Tibial artery (tissue), 4 donors: ENCODE measurements at regions of chr12 and their contacts with region 1.

Region 1: GRCh38 chr12:108905725-108906124 is 25.8 kb downstream of the DAO start:
- DNase-seq: no peak
- H3K4me3 ChIP-seq: no peak overlapping the region
- H3K27ac ChIP-seq: no peak overlapping the region
- H3K4me1 ChIP-seq: no peaks in the 10 kb centered on the region
- H3K27me3 ChIP-seq: peaks cover 0 to 2% of the 10 kb centered on the region in 2 donors
- CTCF ChIP-seq: no peak

Region 2: GRCh38 chr12:107704056-107704455 is 1201.7 kb before region 1 on chr12:
- intact Hi-C with region 1: no loop called
- DNase-seq: no peak
- H3K4me3 ChIP-seq: no peak overlapping the region
- H3K27ac ChIP-seq: no peak overlapping the region
- H3K4me1 ChIP-seq: peaks cover 0 to 5% (median 2%) of the 10 kb centered on the region in 4 donors
- H3K27me3 ChIP-seq: no peaks in the 10 kb centered on the region
- CTCF ChIP-seq: no peak

Region 3: DNA sequence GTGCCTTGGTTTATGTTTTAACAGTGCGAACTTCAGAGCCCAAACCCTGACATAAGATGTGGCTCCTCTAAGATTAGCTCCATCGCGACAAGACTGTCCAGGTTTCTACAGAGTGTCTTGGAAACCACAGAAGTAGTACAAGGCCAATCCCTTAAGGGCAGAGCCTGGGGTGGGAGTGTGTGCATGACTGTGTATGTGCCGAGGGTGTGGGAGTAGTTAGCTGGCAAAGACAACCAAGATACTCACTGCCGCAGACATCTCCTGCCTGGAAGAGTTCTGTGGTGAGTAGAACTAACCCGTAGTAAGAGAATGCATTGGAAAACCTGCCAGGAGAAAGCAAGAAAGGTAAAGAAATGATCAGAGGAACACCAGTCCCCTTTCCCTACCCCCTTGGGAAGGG is 28.2 kb after region 1 on chr12:
- intact Hi-C with region 1: loop called (anchors 2 kb)
- DNase-seq: no peak
- H3K4me3 ChIP-seq: no peak overlapping the region
- H3K27ac ChIP-seq: no peak overlapping the region
- H3K4me1 ChIP-seq: no peaks in the 10 kb centered on the region
- H3K27me3 ChIP-seq: peaks cover 0 to 11% of the 10 kb centered on the region in 2 donors
- CTCF ChIP-seq: no peak